Activated naive CD4-positive, alpha-beta T cell treated with anti-CD3 and anti-CD28 coated beads for 36 hours (primary cell): ENCODE measurements at regions of chr16 and their contacts with region 1.

Region 1: GRCh38 chr16:88941913-88942909 is 34.8 kb downstream of the CBFA2T3 start:
- DNase-seq: peak; percentile 61
- H3K4me3 Mint-ChIP-seq: peak overlapping the region; percentile 38
- H3K27ac Mint-ChIP-seq: no peak overlapping the region
- H3K4me1 Mint-ChIP-seq: peaks cover 2% of the 10 kb centered on the region
- H3K27me3 Mint-ChIP-seq: peaks cover 30% of the 10 kb centered on the region

Region 2: GRCh38 chr16:89052890-89053592 is 110.8 kb after region 1 on chr16:
- CTCF ChIA-PET with region 1: no interaction called
- intact Hi-C with region 1: loop called (anchors 5 kb)
- DNase-seq: peak; percentile 13
- H3K4me3 Mint-ChIP-seq: peak overlapping the region; percentile 75
- H3K27ac Mint-ChIP-seq: peak overlapping the region; percentile 65
- H3K4me1 Mint-ChIP-seq: peaks cover 2% of the 10 kb centered on the region
- H3K27me3 Mint-ChIP-seq: no peaks in the 10 kb centered on the region